Gastrocnemius medialis (tissue), 4 donors: ENCODE measurements at regions of chr1 and their contacts with region 1.

Region 1: DNA sequence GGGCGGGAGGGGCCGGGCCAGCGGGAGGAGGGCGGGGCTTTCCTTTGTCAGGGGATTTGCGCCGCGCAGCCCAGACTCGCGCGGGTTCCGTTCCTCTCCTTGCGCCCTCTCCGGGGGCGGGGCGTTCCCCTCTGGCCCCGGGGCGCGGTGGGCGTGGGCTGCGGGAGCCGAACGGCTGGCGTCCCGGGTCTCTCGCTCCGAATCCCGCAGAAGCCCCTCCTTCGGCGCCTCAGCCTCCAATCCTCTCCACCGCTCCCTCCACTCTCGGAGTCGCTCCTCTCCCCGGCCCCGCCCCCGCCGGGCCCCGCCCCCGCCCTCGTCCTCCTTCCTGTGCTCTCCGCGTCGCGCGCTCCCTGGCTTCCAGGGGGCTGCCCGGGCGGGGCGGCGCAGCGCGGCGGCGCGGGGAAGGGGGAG is 82.8 kb upstream of the BMP8A start:
- DNase-seq: peak; percentile 94 to 96
- ATAC-seq: peak; percentile 88
- H3K4me3 ChIP-seq: peak overlapping the region; percentile 66 to 98 (median 80)
- H3K27ac ChIP-seq: peak overlapping the region; percentile 91 to 98 (median 94)
- H3K4me1 ChIP-seq: peaks cover 60 to 62% of the 10 kb centered on the region in 2 donors
- H3K27me3 ChIP-seq: no peaks in the 10 kb centered on the region
- CTCF ChIP-seq: no peak
- POLR2A ChIP-seq: peak in 1 of 2 donors; percentile 5

Region 2: GRCh38 chr1:39026051-39026865 is 382.4 kb before region 1 on chr1 and contains the start of gene NDUFS5:
- in situ Hi-C with region 1: no loop called
- intact Hi-C with region 1: loop called (anchors 1 kb)
- DNase-seq: peak; percentile 82 to 90
- ATAC-seq: peak; percentile 95 to 96
- H3K4me3 ChIP-seq: peak within 1 kb of the TSS; percentile 68 to 91 (median 80)
- H3K27ac ChIP-seq: peak within 1 kb of the TSS; percentile 91 to 97 (median 94)
- H3K4me1 ChIP-seq: peaks cover 14 to 19% of the 10 kb centered on the region in 2 donors
- H3K27me3 ChIP-seq: no peaks in the 10 kb centered on the region
- CTCF ChIP-seq: peak in 1 of 5 experiments; percentile 15
- POLR2A ChIP-seq: peak; percentile 86 to 95
- total RNA-seq, gene NDUFS5: 603 to 976 (median 911) TPM

Region 3: DNA sequence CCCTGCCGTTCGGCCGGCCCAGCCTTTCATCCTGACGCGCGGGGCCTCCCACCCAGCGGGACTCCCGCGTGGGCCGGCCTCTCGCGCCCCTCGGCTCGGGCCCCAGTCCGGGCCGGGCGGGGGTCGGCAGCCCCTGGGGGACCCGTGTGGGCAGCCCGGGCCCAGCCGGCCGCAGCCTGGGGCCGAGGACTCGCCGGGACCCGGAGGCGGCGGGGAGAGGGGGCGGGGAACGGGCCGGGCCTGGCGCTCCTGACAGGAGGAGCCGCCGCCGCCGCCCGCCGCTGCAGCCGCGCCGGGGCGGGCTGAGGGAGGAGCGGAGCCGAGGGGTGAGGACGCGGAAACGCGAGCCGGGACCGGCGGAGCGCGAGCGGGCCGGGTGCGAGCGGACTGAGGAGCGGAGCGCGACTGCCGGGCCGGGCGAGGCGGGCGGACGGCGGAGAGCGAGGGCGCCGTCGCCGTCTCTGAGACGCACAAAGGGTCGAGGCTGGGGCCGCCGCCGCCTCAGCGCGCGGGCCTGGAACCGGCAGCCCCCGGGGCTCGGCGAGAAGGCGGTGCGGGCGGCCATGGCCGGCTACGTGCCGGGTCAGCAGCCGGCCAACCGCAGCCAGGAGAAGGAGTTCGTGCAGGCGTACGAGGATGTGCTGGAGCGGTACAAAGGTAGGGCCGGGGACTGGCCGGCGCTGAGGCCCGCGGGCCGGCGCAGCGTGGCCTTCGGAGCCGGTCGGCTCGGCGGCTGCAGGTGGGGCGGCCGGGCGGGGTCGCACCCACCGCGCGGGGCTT is 303.4 kb before region 1 on chr1:
- in situ Hi-C with region 1: no loop called
- intact Hi-C with region 1: loop called (anchors 2 kb)
- DNase-seq: peak; percentile 57 to 69
- ATAC-seq: peak; percentile 73 to 76
- H3K4me3 ChIP-seq: peak overlapping the region; percentile 73 to 85 (median 82)
- H3K27ac ChIP-seq: peak overlapping the region; percentile 89 to 96 (median 94)
- H3K4me1 ChIP-seq: peaks cover 47 to 58% of the 10 kb centered on the region in 2 donors
- H3K27me3 ChIP-seq: no peaks in the 10 kb centered on the region
- CTCF ChIP-seq: no peak
- POLR2A ChIP-seq: peak; percentile 63 to 68

Region 4: DNA sequence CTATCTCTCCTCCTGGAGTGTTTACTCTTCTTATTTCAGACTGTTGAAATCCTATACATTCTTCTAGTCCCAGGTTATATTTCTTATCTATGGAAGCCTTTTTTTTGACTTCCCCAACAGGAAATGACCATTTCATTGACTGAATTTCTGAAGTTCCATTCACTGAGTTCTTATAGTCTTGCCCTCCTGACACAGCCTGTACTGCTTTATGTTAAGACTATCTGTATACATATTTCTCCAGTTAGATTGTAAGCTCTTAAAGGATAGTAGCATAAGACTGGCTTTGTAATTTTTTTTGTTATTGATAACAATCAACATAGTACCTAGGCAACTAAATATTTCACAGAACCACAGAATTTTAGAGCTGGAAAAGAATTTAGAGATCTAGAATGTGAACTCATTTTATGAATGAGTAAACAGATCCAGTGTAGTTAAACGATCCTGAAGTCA is 219.0 kb before region 1 on chr1:
- in situ Hi-C with region 1: no loop called
- intact Hi-C with region 1: loop called (anchors 5 kb)
- DNase-seq: no peak
- ATAC-seq: no peak
- H3K4me3 ChIP-seq: no peak overlapping the region
- H3K27ac ChIP-seq: peak overlapping the region in 2 of 4 donors; percentile 18 to 31
- H3K4me1 ChIP-seq: peaks cover 31 to 34% of the 10 kb centered on the region in 2 donors
- H3K27me3 ChIP-seq: no peaks in the 10 kb centered on the region
- CTCF ChIP-seq: no peak
- POLR2A ChIP-seq: no peak

Region 5: GRCh38 chr1:39370602-39371001 is 38.0 kb before region 1 on chr1:
- in situ Hi-C with region 1: no loop called
- intact Hi-C with region 1: no loop called
- DNase-seq: no peak
- ATAC-seq: no peak
- H3K4me3 ChIP-seq: no peak overlapping the region
- H3K27ac ChIP-seq: no peak overlapping the region
- H3K4me1 ChIP-seq: no peaks in the 10 kb centered on the region
- H3K27me3 ChIP-seq: no peaks in the 10 kb centered on the region
- CTCF ChIP-seq: no peak
- POLR2A ChIP-seq: no peak

Region 6: GRCh38 chr1:39387452-39387851 is 21.2 kb before region 1 on chr1:
- in situ Hi-C with region 1: no loop called
- intact Hi-C with region 1: no loop called
- DNase-seq: no peak
- ATAC-seq: no peak
- H3K4me3 ChIP-seq: no peak overlapping the region
- H3K27ac ChIP-seq: no peak overlapping the region
- H3K4me1 ChIP-seq: peaks cover 15 to 16% of the 10 kb centered on the region in 2 donors
- H3K27me3 ChIP-seq: no peaks in the 10 kb centered on the region
- CTCF ChIP-seq: no peak
- POLR2A ChIP-seq: no peak

Region 7: GRCh38 chr1:39453603-39454002 is 45.0 kb after region 1 on chr1:
- in situ Hi-C with region 1: no loop called
- intact Hi-C with region 1: no loop called
- DNase-seq: peak; percentile 5 to 65
- ATAC-seq: peak in 1 of 2 donors; percentile 65
- H3K4me3 ChIP-seq: no peak overlapping the region
- H3K27ac ChIP-seq: no peak overlapping the region
- H3K4me1 ChIP-seq: no peaks in the 10 kb centered on the region
- H3K27me3 ChIP-seq: no peaks in the 10 kb centered on the region
- CTCF ChIP-seq: no peak
- POLR2A ChIP-seq: no peak

Region 8: GRCh38 chr1:39538588-39539465 is 130.2 kb after region 1 on chr1:
- in situ Hi-C with region 1: no loop called
- intact Hi-C with region 1: loop called (anchors 10 kb)
- DNase-seq: peak; percentile 48 to 73
- ATAC-seq: peak; percentile 68 to 82
- H3K4me3 ChIP-seq: no peak overlapping the region
- H3K27ac ChIP-seq: peak overlapping the region; percentile 81 to 85 (median 82)
- H3K4me1 ChIP-seq: peaks cover 10 to 19% of the 10 kb centered on the region in 2 donors
- H3K27me3 ChIP-seq: no peaks in the 10 kb centered on the region
- CTCF ChIP-seq: peak; percentile 73 to 88 (median 84)
- POLR2A ChIP-seq: no peak

Region 9: DNA sequence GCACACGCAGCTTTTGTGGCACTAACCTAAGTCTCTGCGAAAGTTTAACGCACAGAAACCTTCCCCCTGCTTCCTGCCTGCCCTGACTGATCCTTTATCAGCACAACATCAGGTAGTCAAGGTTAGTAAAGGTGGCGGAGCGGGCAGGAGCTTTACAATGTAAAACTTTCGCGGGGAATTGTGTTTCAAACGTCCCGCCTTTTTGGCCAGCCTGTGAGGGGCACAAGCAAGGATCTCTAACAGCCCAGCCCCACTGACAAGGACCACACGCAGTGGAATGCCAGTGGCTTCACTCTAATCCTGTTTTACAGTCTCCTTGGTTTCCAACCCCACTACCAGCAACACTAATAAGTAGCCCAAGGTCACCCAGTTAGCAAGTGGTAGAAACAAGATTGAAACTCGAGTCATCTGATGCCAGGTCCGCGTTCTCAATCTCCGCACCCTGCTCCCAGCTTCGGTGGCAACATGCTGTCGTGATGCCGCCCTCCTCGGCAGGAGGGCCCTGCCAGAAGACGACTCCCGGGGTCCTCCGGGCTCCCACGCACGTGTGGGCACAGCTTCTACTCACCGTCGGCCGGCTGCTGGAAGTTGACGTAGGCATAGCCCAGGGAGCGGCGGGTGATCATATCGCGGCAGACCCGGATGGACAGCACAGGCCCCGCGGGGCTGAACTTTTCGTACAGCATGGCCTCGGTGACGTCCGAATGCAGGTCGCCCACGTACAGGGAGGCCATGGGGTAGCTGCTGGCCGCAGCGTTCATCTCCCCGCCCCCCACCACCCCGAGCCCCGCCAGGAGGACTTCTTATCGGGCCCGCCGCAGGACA is 166.8 kb after region 1 on chr1:
- in situ Hi-C with region 1: no loop called
- intact Hi-C with region 1: loop called (anchors 2 kb)
- DNase-seq: peak; percentile 63 to 69
- ATAC-seq: peak; percentile 9 to 28
- H3K4me3 ChIP-seq: peak overlapping the region; percentile 70 to 96 (median 78)
- H3K27ac ChIP-seq: peak overlapping the region; percentile 93 to 99 (median 96)
- H3K4me1 ChIP-seq: peaks cover 33% of the 10 kb centered on the region in 2 donors
- H3K27me3 ChIP-seq: no peaks in the 10 kb centered on the region
- CTCF ChIP-seq: no peak
- POLR2A ChIP-seq: peak in 1 of 2 donors; percentile 39